CD14-positive monocyte (primary cell): ENCODE measurements at regions of chr9 and their contacts with region 1.

Region 1: GRCh38 chr9:105438141-105438806 is 9.6 kb upstream of the FSD1L start:
- DNase-seq: no peak
- H3K4me3 ChIP-seq: no peak overlapping the region
- H3K4me3 Mint-ChIP-seq: no peak overlapping the region
- H3K27ac ChIP-seq: no peak overlapping the region
- H3K27ac Mint-ChIP-seq: no peak overlapping the region
- H3K4me1 ChIP-seq: no peaks in the 10 kb centered on the region
- H3K4me1 Mint-ChIP-seq: peaks cover 3% of the 10 kb centered on the region
- H3K27me3 ChIP-seq: no peaks in the 10 kb centered on the region
- H3K27me3 Mint-ChIP-seq: no peaks in the 10 kb centered on the region
- CTCF ChIP-seq: no peak

Region 2: GRCh38 chr9:105457560-105458294 is 19.5 kb after region 1 on chr9:
- intact Hi-C with region 1: no loop called
- DNase-seq: no peak
- H3K4me3 ChIP-seq: no peak overlapping the region
- H3K4me3 Mint-ChIP-seq: no peak overlapping the region
- H3K27ac ChIP-seq: no peak overlapping the region
- H3K27ac Mint-ChIP-seq: no peak overlapping the region
- H3K4me1 ChIP-seq: no peaks in the 10 kb centered on the region
- H3K4me1 Mint-ChIP-seq: peaks cover 3% of the 10 kb centered on the region
- H3K27me3 ChIP-seq: no peaks in the 10 kb centered on the region
- H3K27me3 Mint-ChIP-seq: no peaks in the 10 kb centered on the region
- CTCF ChIP-seq: no peak

Region 3: GRCh38 chr9:105557771-105558610 is 119.7 kb after region 1 on chr9 and contains the start of gene FKTN:
- intact Hi-C with region 1: loop called in 1 of 2 experiments (anchors 10 kb)
- DNase-seq: peak; percentile 61 to 71 (median 70)
- H3K4me3 ChIP-seq: peak within 1 kb of the TSS; percentile 70 to 91 (median 75)
- H3K4me3 Mint-ChIP-seq: peak within 1 kb of the TSS; percentile 95 to 97
- H3K27ac ChIP-seq: peak within 1 kb of the TSS; percentile 19 to 60
- H3K27ac Mint-ChIP-seq: peak within 1 kb of the TSS in 6 of 7 donors; percentile 57 to 81 (median 74)
- H3K4me1 ChIP-seq: peaks cover 6 to 9% of the 10 kb centered on the region in 2 donors
- H3K4me1 Mint-ChIP-seq: peaks cover 14% of the 10 kb centered on the region
- H3K27me3 ChIP-seq: no peaks in the 10 kb centered on the region
- H3K27me3 Mint-ChIP-seq: peaks cover 0 to 1% (median 0%) of the 10 kb centered on the region in 3 donors
- CTCF ChIP-seq: no peak
- polyA plus RNA-seq, gene FKTN: 1.7 to 3.2 (median 2.7) TPM

Region 4: GRCh38 chr9:105694190-105694847 is 256.0 kb after region 1 on chr9 and contains the start of gene TMEM38B:
- intact Hi-C with region 1: loop called in 1 of 2 experiments (anchors 10 kb)
- DNase-seq: peak; percentile 65 to 77 (median 77)
- H3K4me3 ChIP-seq: peak within 1 kb of the TSS; percentile 51 to 81 (median 80)
- H3K4me3 Mint-ChIP-seq: peak within 1 kb of the TSS; percentile 90 to 92
- H3K27ac ChIP-seq: peak within 1 kb of the TSS; percentile 69 to 86
- H3K27ac Mint-ChIP-seq: peak within 1 kb of the TSS; percentile 53 to 92 (median 85)
- H3K4me1 ChIP-seq: peaks cover 20 to 31% of the 10 kb centered on the region in 2 donors
- H3K4me1 Mint-ChIP-seq: peaks cover 22% of the 10 kb centered on the region
- H3K27me3 ChIP-seq: peaks cover 3 to 5% of the 10 kb centered on the region in 2 donors
- H3K27me3 Mint-ChIP-seq: peaks cover 8 to 16% (median 9%) of the 10 kb centered on the region in 3 donors
- CTCF ChIP-seq: no peak
- polyA plus RNA-seq, gene TMEM38B: 4.5 to 14.8 (median 12.2) TPM